ENCODE measurements at regions of chr1 and their contacts with region 1.

Region 1: GRCh38 chr1:212782422-212783154 is 9.0 kb downstream of the NSL1 start:
- H3K4me3 Mint-ChIP-seq: no peak overlapping the region
- H3K27ac Mint-ChIP-seq: peak overlapping the region; percentile 83
- H3K4me1 Mint-ChIP-seq: peaks cover 34% of the 10 kb centered on the region
- H3K27me3 Mint-ChIP-seq: no peaks in the 10 kb centered on the region

Region 2: DNA sequence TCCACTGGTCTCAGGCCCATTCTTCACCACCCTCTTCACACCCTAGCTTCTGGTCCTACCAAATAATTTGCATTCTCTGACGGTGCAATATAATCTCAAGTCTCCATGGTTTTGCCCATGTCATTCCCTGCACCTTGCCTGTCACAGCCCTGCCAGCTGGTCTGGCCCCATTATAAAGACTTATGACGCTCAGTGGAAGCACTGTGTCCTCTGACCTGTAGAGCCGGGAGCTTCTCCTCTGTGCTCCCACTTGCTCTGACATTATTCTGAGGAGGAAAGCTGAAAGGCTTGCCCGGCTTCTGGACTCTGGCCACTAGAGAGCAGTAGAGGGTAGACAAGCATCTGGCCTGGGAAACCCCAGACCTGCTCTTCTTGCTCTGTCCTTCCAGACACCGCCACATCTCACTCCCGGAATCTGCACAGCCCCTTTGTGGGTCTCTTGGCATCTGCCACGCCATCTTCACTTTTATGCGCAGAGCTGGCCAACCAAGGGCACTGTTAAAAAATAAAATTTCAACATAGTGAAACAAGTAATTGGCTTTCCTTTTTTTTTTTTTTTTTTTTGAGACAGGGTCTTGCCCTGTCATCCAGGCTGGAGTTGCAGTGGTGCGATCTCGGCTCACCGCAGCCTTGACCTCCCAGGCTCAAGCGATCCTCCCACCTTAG is 305.4 kb before region 1 on chr1:
- intact Hi-C with region 1: loop called (anchors 5 kb)
- H3K4me3 Mint-ChIP-seq: peak overlapping the region; percentile 27
- H3K27ac Mint-ChIP-seq: peak overlapping the region; percentile 53
- H3K4me1 Mint-ChIP-seq: peaks cover 47% of the 10 kb centered on the region
- H3K27me3 Mint-ChIP-seq: peaks cover 25% of the 10 kb centered on the region

Region 3: GRCh38 chr1:212566522-212567479 is 215.8 kb before region 1 on chr1:
- intact Hi-C with region 1: no loop called
- H3K4me3 Mint-ChIP-seq: peak overlapping the region; percentile 88
- H3K27ac Mint-ChIP-seq: peak overlapping the region; percentile 90
- H3K4me1 Mint-ChIP-seq: peaks cover 28% of the 10 kb centered on the region
- H3K27me3 Mint-ChIP-seq: peaks cover 7% of the 10 kb centered on the region

Region 4: GRCh38 chr1:212665241-212666115 is 117.1 kb before region 1 on chr1:
- intact Hi-C with region 1: loop called (anchors 1 kb)
- H3K4me3 Mint-ChIP-seq: peak overlapping the region; percentile 87
- H3K27ac Mint-ChIP-seq: peak overlapping the region; percentile 99
- H3K4me1 Mint-ChIP-seq: peaks cover 75% of the 10 kb centered on the region
- H3K27me3 Mint-ChIP-seq: peaks cover 5% of the 10 kb centered on the region

Region 5: DNA sequence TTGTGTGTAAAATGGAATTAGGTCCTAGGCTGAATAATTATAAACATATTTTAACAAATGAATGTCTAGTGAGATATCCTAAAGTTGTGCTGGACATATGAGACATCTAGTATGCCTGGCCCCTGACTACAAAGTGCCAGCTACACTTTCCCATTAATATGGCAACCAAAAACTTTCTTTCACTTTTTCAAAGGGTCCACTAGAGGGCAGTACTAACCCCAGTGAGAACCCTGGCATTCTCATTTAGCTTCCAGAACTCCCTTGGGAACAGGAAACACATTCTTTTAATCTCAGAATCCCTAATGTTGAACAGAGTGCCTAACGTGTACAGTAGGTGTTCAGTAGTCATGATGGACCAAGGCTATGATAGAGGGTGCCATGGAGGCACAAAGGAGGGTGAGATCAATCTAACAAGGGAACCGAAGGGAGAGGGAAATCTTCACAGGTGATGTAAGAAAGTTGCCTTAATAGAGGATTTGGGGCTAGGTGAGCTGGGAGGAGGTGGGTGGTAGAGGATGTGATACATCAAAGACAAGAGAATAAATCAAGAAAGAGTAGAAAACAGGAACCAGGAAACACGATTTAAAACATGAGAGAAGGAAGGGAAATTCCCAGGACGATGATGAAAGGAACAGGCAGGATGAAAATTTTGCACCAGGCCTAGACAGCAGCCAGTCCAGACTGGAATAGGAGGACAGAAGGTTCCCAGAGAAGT is 32.6 kb before region 1 on chr1:
- intact Hi-C with region 1: loop called (anchors 2 kb)
- H3K4me3 Mint-ChIP-seq: peak overlapping the region; percentile 48
- H3K27ac Mint-ChIP-seq: peak overlapping the region; percentile 68
- H3K4me1 Mint-ChIP-seq: peaks cover 36% of the 10 kb centered on the region
- H3K27me3 Mint-ChIP-seq: no peaks in the 10 kb centered on the region

Measured in dendritic cell treated with granulocyte-macrophage colony-stimulating factor and Interleukin-4, amounts not matched to agents 40 ng/mL and 50 ng/mL, for 4 days (primary cell).